Endothelial cell of umbilical vein (primary cell): ENCODE measurements at regions of chr15 and their contacts with region 1.

Region 1: GRCh38 chr15:98727115-98728085 is 79.1 kb downstream of the IGF1R start:
- DNase-seq: peak; percentile 92
- H3K4me3 ChIP-seq: no peak overlapping the region
- H3K27ac ChIP-seq: peak overlapping the region; percentile 98
- H3K4me1 ChIP-seq: peaks cover 35% of the 10 kb centered on the region
- H3K27me3 ChIP-seq: no peaks in the 10 kb centered on the region
- CTCF ChIP-seq: no peak
- POLR2A ChIP-seq: no peak

Region 2: GRCh38 chr15:98668566-98669308 is 58.7 kb before region 1 on chr15:
- CTCF ChIA-PET with region 1: no interaction called
- POLR2A ChIA-PET with region 1: no interaction called
- dilution Hi-C with region 1: no loop called
- intact Hi-C with region 1: loop called (anchors 1 kb)
- DNase-seq: peak; percentile 75
- H3K4me3 ChIP-seq: peak overlapping the region in 1 of 3 experiments; percentile 5
- H3K27ac ChIP-seq: peak overlapping the region; percentile 64
- H3K4me1 ChIP-seq: peaks cover 49% of the 10 kb centered on the region
- H3K27me3 ChIP-seq: no peaks in the 10 kb centered on the region
- CTCF ChIP-seq: no peak
- POLR2A ChIP-seq: no peak

Region 3: GRCh38 chr15:98738689-98739401 is 11.4 kb after region 1 on chr15:
- CTCF ChIA-PET with region 1: no interaction called
- POLR2A ChIA-PET with region 1: no interaction called
- dilution Hi-C with region 1: no loop called
- intact Hi-C with region 1: loop called (anchors 1 kb)
- DNase-seq: no peak
- H3K4me3 ChIP-seq: no peak overlapping the region
- H3K27ac ChIP-seq: no peak overlapping the region
- H3K4me1 ChIP-seq: peaks cover 11% of the 10 kb centered on the region
- H3K27me3 ChIP-seq: no peaks in the 10 kb centered on the region
- CTCF ChIP-seq: no peak
- POLR2A ChIP-seq: no peak